WTC11 (cell line): ENCODE measurements at regions of chr6 and their contacts with region 1.

Region 1: GRCh38 chr6:43769526-43770416 is at the start of gene VEGFA:
- DNase-seq: peak; percentile 94
- ATAC-seq: peak; percentile 49
- H3K4me3 Mint-ChIP-seq: peak within 1 kb of the TSS; percentile 98
- H3K27ac Mint-ChIP-seq: peak within 1 kb of the TSS; percentile 85
- H3K4me1 Mint-ChIP-seq: peaks cover 48% of the 10 kb centered on the region
- H3K27me3 Mint-ChIP-seq: peaks cover 11% of the 10 kb centered on the region
- CTCF ChIP-seq: peak; percentile 94
- total RNA-seq, gene VEGFA: 41.9 to 44.4 TPM (median 43.8 TPM) in 3 replicates

Region 2: GRCh38 chr6:43644931-43645612 is 124.7 kb before region 1 on chr6 and contains the start of gene RSPH9:
- CTCF ChIA-PET with region 1: interaction called, 13 read pairs
- POLR2A ChIA-PET with region 1: interaction called, 4 read pairs
- DNase-seq: peak; percentile 99
- ATAC-seq: peak; percentile 94
- H3K4me3 Mint-ChIP-seq: peak within 1 kb of the TSS; percentile 76
- H3K27ac Mint-ChIP-seq: peak within 1 kb of the TSS; percentile 99
- H3K4me1 Mint-ChIP-seq: peaks cover 15% of the 10 kb centered on the region
- H3K27me3 Mint-ChIP-seq: peaks cover 3% of the 10 kb centered on the region; the same call in 1 of the 2 replicates
- CTCF ChIP-seq: no peak
- total RNA-seq, gene RSPH9: 0.16 to 0.35 TPM (median 0.32 TPM) in 3 replicates

Region 3: DNA sequence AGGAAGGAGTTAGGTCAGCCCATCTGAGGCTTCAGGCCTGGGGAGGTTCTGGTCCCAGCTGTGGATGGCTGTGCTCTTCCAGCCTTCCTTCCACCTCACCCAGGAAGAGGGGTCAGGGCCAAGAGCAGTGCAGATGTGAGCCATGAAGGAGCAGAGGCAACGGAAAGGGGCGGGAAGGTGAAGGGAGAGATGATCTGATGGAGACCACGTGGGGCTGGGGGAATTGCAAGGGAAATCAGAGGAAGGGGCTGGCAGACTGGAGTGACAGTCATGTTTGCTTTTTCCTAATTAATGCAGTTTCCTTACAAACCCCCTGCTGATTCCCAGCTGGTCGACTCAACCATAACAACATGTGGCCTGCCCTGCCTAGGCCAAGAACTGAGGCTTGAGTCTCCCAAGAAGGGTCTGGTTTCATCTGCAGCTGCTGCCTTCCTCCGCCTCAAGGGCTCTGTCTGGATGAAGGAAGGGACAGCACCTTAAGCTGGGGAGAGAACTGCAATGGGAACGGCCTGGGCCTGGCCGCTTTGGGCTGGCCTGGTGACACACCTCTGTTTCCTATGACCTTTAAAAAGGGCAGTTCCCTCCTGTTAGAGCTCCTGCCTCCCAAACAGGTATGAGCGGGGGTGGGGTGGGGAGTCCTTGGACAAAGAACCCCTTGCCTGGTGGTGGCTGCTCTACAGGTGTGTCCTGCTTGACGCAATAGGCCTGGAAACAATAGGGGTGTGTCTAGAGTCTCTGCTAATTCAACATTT is 74.4 kb before region 1 on chr6:
- CTCF ChIA-PET with region 1: interaction called, 12 read pairs
- POLR2A ChIA-PET with region 1: no interaction called
- DNase-seq: peak; percentile 73
- ATAC-seq: peak; percentile 73
- H3K4me3 Mint-ChIP-seq: no peak overlapping the region
- H3K27ac Mint-ChIP-seq: peak overlapping the region; percentile 69
- H3K4me1 Mint-ChIP-seq: peaks cover 44% of the 10 kb centered on the region
- H3K27me3 Mint-ChIP-seq: no peaks in the 10 kb centered on the region; the same call in 1 of the 2 replicates
- CTCF ChIP-seq: no peak

Region 4: DNA sequence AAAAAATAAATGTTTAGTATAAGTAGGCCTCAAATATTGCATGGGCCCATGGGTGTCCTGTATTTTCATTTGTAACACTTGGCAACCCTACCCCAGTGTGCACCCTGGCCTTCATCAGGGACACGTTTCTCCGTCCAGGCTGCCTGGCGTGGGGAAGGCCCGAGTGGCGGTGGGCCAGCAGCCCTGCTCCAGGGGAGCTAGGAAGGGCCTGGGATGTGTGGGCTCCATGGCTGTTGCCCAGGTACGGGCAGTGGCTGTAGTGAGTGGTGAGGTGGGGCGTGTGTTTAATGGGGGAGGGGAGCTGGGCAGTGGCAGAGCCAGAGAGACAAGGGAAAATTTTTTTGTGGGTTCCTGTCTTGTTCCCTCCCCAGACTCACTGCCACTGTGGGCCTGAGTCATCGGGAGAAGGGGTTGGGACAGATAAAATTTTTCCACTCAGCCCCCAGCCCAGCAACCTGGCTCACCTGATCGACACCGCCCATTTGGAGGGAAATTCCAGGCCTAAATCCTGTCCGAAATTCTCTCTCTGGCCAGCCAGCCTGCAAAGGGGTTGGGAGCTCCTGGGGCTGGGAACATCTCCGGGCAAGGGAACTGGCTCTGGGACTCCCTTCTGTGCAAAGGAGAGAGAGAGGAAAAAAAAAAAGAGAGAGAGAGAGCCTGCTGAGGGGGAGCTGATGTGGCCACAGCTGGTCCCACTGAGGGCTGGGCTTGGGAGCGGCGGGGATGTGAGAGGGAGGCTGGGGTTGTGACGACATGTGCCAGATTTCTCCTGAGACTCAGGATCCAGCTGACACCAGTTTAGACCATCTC is 32.3 kb before region 1 on chr6:
- CTCF ChIA-PET with region 1: interaction called, 11 read pairs
- POLR2A ChIA-PET with region 1: no interaction called
- DNase-seq: no peak
- ATAC-seq: peak; percentile 31
- H3K4me3 Mint-ChIP-seq: no peak overlapping the region
- H3K27ac Mint-ChIP-seq: peak overlapping the region; percentile 2; the same call in 1 of the 2 replicates
- H3K4me1 Mint-ChIP-seq: peaks cover 21% of the 10 kb centered on the region
- H3K27me3 Mint-ChIP-seq: no peaks in the 10 kb centered on the region
- CTCF ChIP-seq: no peak

Region 5: DNA sequence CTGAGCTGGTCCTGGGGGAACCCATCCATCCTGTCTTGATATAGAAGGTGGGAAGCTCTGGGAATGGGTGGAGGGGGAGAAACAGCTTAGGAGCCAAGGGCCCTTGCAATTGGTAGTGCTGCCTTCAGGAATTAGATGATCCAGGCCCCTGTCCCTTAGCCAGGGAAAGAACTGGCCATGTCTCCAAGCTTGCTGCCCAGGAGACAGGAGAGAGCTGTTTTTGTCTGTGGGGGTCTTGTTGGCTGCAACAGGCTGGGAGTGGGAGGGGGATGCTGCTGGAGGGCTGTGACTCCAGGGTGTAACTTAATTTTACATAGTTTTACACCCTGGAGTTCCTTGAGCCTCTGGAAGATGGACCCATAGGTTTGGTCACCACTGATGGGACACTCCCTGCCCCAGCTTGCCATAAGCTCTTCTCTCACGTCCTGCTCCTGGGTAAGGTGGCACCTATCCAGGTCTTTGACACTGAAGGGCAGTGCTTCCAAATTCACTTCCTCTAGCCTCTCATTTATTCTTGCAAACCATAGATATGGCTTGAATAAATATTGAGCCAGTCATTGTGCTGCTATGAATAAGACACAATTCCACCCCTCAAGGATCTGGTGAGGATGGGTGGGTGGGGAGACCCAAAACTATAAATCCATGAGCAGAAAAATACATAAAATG is 17.0 kb after region 1 on chr6:
- CTCF ChIA-PET with region 1: interaction called, 16 read pairs
- POLR2A ChIA-PET with region 1: interaction called, 7 read pairs
- DNase-seq: no peak
- ATAC-seq: no peak
- H3K4me3 Mint-ChIP-seq: no peak overlapping the region
- H3K27ac Mint-ChIP-seq: no peak overlapping the region
- H3K4me1 Mint-ChIP-seq: no peaks in the 10 kb centered on the region
- H3K27me3 Mint-ChIP-seq: no peaks in the 10 kb centered on the region
- CTCF ChIP-seq: no peak

Region 6: GRCh38 chr6:43926634-43927524 is 157.1 kb after region 1 on chr6:
- CTCF ChIA-PET with region 1: interaction called, 6 read pairs
- POLR2A ChIA-PET with region 1: interaction called, 14 read pairs
- DNase-seq: peak; percentile 77
- ATAC-seq: peak; percentile 68
- H3K4me3 Mint-ChIP-seq: no peak overlapping the region
- H3K27ac Mint-ChIP-seq: peak overlapping the region; percentile 68; the same call in 1 of the 2 replicates
- H3K4me1 Mint-ChIP-seq: peaks cover 15% of the 10 kb centered on the region
- H3K27me3 Mint-ChIP-seq: no peaks in the 10 kb centered on the region
- CTCF ChIP-seq: no peak

Region 7: GRCh38 chr6:44002593-44003344 is 233.0 kb after region 1 on chr6:
- CTCF ChIA-PET with region 1: interaction called, 17 read pairs
- POLR2A ChIA-PET with region 1: interaction called, 4 read pairs
- DNase-seq: peak; percentile 78
- ATAC-seq: peak; percentile 12
- H3K4me3 Mint-ChIP-seq: peak overlapping the region; percentile 69
- H3K27ac Mint-ChIP-seq: no peak overlapping the region
- H3K4me1 Mint-ChIP-seq: peaks cover 66% of the 10 kb centered on the region
- H3K27me3 Mint-ChIP-seq: peaks cover 37% of the 10 kb centered on the region
- CTCF ChIP-seq: no peak

Region 8: GRCh38 chr6:44642870-44643529 is 873.2 kb after region 1 on chr6:
- CTCF ChIA-PET with region 1: no interaction called
- POLR2A ChIA-PET with region 1: no interaction called
- DNase-seq: no peak
- ATAC-seq: no peak
- H3K4me3 Mint-ChIP-seq: no peak overlapping the region
- H3K27ac Mint-ChIP-seq: no peak overlapping the region
- H3K4me1 Mint-ChIP-seq: no peaks in the 10 kb centered on the region
- H3K27me3 Mint-ChIP-seq: peaks cover under 1% of the 10 kb centered on the region
- CTCF ChIP-seq: no peak